Common myeloid progenitor, CD34-positive (primary cell): ENCODE measurements at regions of chr3 and their contacts with region 1.

Region 1: GRCh38 chr3:56915966-56916586 is 114.3 kb upstream of the ARHGEF3 start:
- DNase-seq: peak in 2 of 3 donors; percentile 77 to 86
- H3K4me3 ChIP-seq: peak overlapping the region in 6 of 7 experiments; percentile 59 to 83 (median 72)
- H3K27ac ChIP-seq: peak overlapping the region; percentile 9 to 60
- H3K4me1 ChIP-seq: peaks cover 10 to 55% (median 23%) of the 10 kb centered on the region in 4 experiments
- H3K27me3 ChIP-seq: no peaks in the 10 kb centered on the region

Region 2: GRCh38 chr3:56904552-56905215 is 11.4 kb before region 1 on chr3:
- CTCF ChIA-PET with region 1: interaction called, 17 read pairs
- POLR2A ChIA-PET with region 1: no interaction called
- DNase-seq: peak in 1 of 3 donors; percentile 16
- H3K4me3 ChIP-seq: no peak overlapping the region
- H3K27ac ChIP-seq: no peak overlapping the region
- H3K4me1 ChIP-seq: peaks cover 0 to 44% (median 12%) of the 10 kb centered on the region in 4 experiments
- H3K27me3 ChIP-seq: no peaks in the 10 kb centered on the region